ENCODE measurements at regions of chr1 and their contacts with region 1.

Region 1: DNA sequence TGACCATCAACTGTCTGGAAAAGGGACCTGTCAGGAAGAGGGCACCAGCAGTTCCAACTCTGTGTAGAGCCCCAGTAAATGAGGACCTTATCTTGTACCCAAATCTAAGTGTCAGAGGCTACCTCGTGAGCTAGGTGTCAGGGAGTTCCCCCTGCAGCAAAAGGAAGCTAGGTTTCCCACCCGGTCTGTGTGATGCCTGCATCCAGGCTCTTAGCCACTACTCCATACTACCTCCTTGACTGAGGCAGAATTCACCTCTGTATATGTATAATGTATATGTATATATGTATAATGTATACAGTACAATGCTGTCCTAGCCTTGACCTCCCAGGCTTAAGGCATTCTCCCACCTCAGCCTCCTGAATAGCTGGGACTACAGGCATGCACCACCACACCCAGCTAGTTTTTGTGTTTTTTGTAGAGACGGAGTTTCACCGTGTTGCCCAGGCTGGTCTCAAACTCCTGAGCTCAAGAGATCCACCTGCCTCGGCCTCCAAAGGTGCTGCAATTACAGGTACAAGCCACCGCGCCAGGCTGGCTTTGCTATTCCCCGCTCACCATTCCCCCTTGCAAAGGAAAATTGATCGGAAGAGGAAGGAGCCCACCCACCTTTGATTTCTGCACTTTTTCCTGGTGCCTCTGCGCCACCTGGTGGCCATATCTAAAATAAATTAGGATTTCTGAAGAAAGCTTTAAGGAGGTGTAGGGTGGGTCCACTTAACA is 15.7 kb upstream of the LUZP1 start:
- DNase-seq: peak; percentile 72
- ATAC-seq: peak; percentile 96
- H3K4me3 Mint-ChIP-seq: no peak overlapping the region
- H3K27ac Mint-ChIP-seq: no peak overlapping the region
- H3K4me1 Mint-ChIP-seq: no peaks in the 10 kb centered on the region
- H3K27me3 Mint-ChIP-seq: peaks cover 10% of the 10 kb centered on the region
- CTCF ChIP-seq: peak; percentile 86

Region 2: DNA sequence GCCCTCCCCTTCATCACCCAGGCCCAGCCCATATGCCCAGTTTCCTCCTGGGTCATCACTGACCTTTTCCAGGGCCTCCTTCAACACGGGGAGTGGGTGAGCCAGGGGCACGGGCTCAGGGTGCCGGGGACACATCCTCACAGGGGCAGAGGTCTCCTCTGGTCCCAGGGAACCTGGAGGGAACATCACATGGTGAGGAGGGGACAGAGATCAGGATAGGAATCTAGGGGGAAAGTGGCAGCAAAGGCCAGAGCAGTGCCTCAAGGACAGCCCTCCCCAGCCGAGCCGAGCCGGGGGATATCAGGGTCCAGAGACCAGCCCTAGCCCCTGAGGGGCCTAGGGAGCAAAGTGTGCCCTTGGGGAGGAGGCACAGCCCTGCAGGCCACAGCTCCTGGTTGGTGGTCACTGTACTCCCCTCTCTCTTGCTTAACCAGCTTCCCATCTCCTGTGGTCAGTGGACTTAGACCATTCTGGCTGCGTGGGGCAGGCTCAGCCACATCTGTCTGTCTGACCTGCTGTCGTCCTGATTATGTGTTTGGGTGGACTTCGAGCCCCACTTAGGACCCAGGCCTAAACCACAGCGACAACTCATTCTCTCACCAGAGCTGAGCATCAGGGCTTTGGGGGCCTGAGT is 221.2 kb before region 1 on chr1:
- CTCF ChIA-PET with region 1: interaction called, 14 read pairs
- POLR2A ChIA-PET with region 1: no interaction called
- DNase-seq: no peak
- ATAC-seq: no peak
- H3K4me3 Mint-ChIP-seq: no peak overlapping the region
- H3K27ac Mint-ChIP-seq: no peak overlapping the region
- H3K4me1 Mint-ChIP-seq: no peaks in the 10 kb centered on the region
- H3K27me3 Mint-ChIP-seq: no peaks in the 10 kb centered on the region; the same call in none of the 2 replicates
- CTCF ChIP-seq: no peak

Region 3: DNA sequence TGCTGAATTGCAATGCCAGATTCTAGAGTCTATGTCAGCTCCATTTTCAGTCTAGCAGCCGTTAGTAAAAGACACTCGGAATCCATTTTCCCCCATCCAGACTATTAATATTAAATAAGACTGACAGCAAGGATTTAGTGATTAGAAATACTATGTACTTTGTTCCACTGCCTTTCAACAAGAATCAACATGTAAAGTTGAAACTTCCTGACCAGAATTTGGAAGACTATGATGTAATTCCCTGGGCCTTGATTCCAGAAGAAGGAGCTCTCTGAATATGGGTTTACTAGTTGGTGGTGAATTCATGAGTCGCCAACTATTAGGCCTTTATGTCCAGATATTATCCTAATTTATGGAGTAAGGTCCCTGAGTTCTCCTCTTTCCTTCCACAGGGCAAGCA is 140.3 kb before region 1 on chr1:
- CTCF ChIA-PET with region 1: interaction called, 15 read pairs
- POLR2A ChIA-PET with region 1: no interaction called
- DNase-seq: no peak
- ATAC-seq: no peak
- H3K4me3 Mint-ChIP-seq: no peak overlapping the region
- H3K27ac Mint-ChIP-seq: no peak overlapping the region
- H3K4me1 Mint-ChIP-seq: peaks cover 25% of the 10 kb centered on the region
- H3K27me3 Mint-ChIP-seq: no peaks in the 10 kb centered on the region
- CTCF ChIP-seq: no peak

Region 4: DNA sequence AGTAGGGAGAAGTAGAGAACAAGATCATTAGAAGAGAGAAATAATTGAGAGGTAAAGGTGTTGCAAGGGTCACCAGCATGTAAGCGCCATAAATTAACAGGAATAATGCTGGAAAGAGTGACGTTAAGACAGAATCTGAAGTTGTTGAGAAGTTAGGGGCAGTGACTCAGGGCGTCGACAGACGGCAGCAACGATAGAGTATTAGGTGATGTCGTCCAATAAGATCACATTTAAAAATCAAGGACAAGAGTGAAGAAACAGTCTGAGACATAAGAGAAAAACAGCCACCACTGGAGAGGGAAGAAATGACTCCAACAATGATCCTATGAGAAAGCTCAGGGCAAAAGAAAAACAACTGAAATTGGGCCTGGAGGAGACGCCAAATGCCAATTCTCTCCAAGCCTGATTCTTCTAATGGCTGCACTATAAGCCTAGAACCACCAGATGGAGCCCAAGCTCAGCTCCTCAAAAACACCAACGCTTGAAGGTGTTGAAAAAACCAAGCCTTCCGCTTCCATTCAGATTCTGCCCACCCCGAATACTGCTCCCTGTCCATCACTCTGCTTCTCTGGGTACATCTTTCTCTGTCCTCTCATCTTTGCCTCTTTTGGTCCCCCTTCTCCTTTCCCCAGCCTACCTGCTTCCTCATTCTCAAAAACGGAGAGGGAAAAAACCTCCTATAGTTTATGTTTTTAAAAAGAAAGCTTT is 85.8 kb before region 1 on chr1:
- CTCF ChIA-PET with region 1: interaction called, 156 read pairs
- POLR2A ChIA-PET with region 1: no interaction called
- DNase-seq: peak; percentile 59
- ATAC-seq: peak; percentile 84
- H3K4me3 Mint-ChIP-seq: no peak overlapping the region
- H3K27ac Mint-ChIP-seq: no peak overlapping the region
- H3K4me1 Mint-ChIP-seq: peaks cover 38% of the 10 kb centered on the region
- H3K27me3 Mint-ChIP-seq: no peaks in the 10 kb centered on the region
- CTCF ChIP-seq: peak; percentile 40

Region 5: DNA sequence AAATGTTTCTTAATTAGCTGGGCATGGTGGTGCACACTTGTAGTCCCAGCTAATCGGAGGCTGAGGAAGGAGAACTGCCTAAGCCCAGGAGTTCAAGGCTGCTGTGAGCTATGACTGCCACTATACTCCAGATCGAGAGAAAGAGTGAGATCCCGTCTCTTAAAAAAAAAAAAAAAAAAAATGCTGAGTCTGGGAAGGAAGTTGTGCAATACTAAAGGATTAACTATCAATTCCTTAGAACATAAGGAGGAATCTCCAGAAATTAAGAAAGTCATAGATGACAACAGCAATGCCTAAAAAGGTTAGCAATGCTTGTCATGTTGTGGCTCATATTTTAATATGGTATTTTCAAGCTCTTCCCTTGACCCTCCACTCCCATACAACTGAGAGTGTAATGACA is 21.0 kb before region 1 on chr1:
- CTCF ChIA-PET with region 1: interaction called, 29 read pairs
- POLR2A ChIA-PET with region 1: interaction called, 3 read pairs
- DNase-seq: no peak
- ATAC-seq: no peak
- H3K4me3 Mint-ChIP-seq: no peak overlapping the region
- H3K27ac Mint-ChIP-seq: peak overlapping the region; percentile 18; the same call in 1 of the 2 replicates
- H3K4me1 Mint-ChIP-seq: peaks cover 44% of the 10 kb centered on the region
- H3K27me3 Mint-ChIP-seq: no peaks in the 10 kb centered on the region
- CTCF ChIP-seq: no peak

Region 6: DNA sequence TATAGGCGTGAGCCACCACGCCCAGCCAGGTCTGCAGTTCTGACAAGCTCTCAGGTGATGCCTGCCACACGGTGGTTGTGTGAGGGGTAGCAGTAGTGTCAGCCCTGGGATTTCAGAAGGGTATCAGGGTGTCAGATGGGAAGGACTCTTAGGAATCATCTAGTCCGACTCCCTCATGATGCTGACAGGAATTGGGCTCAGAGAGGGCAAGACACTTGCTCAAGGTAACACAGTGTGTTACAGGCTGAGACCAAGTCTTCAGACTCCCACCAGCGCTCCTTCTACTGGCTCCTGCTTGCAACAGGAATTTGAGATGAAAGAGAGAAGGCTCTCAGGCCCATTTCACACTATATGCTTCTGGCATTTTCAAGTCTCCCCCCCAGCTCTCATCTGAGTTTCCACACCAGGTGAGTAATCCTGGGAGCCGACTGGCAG is 26.0 kb after region 1 on chr1:
- CTCF ChIA-PET with region 1: interaction called, 15 read pairs
- POLR2A ChIA-PET with region 1: no interaction called
- DNase-seq: peak; percentile 66
- ATAC-seq: peak; percentile 95
- H3K4me3 Mint-ChIP-seq: no peak overlapping the region
- H3K27ac Mint-ChIP-seq: peak overlapping the region; percentile 27; the same call in 1 of the 2 replicates
- H3K4me1 Mint-ChIP-seq: peaks cover 4% of the 10 kb centered on the region
- H3K27me3 Mint-ChIP-seq: no peaks in the 10 kb centered on the region
- CTCF ChIP-seq: 0 out of 2 replicates have a peak, but pooled peaks have one; percentile 21

Measured in WTC11 (cell line).